Activated naive CD4-positive, alpha-beta T cell treated with anti-CD3 and anti-CD28 coated beads for 36 hours (primary cell): ENCODE measurements at regions of chr6 and their contacts with region 1.

Region 1: DNA sequence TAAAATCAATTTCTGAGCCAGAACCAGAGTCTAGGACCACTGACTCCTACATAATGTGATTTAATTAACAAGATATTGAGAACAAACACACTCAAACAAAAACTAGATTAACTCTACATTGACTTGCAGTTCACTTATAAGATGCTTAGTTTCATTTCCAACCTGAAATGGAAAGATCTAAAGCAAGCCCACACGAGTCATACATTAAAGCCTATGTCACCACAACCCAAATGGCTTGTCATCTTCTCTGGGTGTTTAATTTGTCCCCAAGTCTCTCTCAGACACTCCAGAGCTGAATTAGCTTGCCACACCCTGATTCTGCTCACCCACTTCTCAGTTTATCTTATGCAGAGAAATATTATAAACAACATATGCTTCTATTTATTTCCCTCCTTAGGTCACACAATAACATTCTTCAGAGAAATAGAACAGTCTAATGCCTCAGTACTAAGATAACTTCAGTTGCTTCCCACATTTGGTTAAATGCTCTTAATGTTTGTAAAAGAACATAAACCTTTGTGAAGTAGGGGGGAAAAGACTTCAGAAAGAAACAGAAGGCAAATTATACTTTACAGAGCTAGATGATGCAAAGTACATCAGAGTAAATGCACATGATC is 8.8 kb upstream of the FBXO30 start:
- DNase-seq: peak; percentile 22
- H3K4me3 Mint-ChIP-seq: no peak overlapping the region
- H3K27ac Mint-ChIP-seq: no peak overlapping the region
- H3K4me1 Mint-ChIP-seq: peaks cover 37% of the 10 kb centered on the region
- H3K27me3 Mint-ChIP-seq: no peaks in the 10 kb centered on the region

Region 2: GRCh38 chr6:145836170-145836569 is 12.7 kb after region 1 on chr6:
- CTCF ChIA-PET with region 1: no interaction called
- intact Hi-C with region 1: loop called (anchors 1 kb)
- DNase-seq: peak; percentile 39
- H3K4me3 Mint-ChIP-seq: no peak overlapping the region
- H3K27ac Mint-ChIP-seq: no peak overlapping the region
- H3K4me1 Mint-ChIP-seq: peaks cover 7% of the 10 kb centered on the region
- H3K27me3 Mint-ChIP-seq: no peaks in the 10 kb centered on the region

Region 3: DNA sequence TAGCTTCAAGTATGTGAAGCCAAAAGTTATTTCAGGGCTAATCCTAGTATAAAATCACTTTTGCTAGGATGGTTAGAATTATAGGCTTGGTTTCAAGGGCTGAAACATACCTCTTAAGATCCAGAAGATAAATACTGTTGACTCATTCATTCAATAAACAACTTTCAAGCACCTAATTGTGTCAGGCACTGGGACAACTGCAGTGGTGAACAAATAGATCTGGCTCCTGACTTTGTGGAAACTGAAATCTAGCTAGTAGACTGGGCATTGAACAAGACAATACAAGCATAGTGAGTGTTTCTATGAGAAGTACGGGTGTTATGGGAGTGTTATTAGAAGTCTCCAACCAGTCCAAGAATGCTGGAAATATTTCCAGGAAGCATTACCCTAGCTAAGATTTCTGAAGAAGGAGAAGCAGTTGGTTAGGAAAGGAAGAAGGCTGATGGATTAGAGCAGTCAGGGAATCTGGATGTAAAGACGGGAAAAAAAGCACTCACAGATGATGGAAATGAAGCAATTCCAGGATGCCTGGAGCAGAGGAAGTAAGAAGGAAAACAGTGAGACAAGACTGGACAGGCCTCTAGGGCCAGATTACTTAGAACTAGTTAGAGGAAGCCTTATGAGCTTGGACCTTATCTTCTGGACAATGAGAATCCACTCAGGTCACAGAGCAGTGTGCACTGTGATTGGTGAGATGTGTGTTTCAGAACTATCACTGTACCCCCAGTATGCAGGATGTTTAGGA is 587.6 kb after region 1 on chr6:
- CTCF ChIA-PET with region 1: no interaction called
- intact Hi-C with region 1: no loop called
- DNase-seq: no peak
- H3K4me3 Mint-ChIP-seq: no peak overlapping the region
- H3K27ac Mint-ChIP-seq: no peak overlapping the region
- H3K4me1 Mint-ChIP-seq: no peaks in the 10 kb centered on the region
- H3K27me3 Mint-ChIP-seq: peaks cover 2% of the 10 kb centered on the region

Region 4: DNA sequence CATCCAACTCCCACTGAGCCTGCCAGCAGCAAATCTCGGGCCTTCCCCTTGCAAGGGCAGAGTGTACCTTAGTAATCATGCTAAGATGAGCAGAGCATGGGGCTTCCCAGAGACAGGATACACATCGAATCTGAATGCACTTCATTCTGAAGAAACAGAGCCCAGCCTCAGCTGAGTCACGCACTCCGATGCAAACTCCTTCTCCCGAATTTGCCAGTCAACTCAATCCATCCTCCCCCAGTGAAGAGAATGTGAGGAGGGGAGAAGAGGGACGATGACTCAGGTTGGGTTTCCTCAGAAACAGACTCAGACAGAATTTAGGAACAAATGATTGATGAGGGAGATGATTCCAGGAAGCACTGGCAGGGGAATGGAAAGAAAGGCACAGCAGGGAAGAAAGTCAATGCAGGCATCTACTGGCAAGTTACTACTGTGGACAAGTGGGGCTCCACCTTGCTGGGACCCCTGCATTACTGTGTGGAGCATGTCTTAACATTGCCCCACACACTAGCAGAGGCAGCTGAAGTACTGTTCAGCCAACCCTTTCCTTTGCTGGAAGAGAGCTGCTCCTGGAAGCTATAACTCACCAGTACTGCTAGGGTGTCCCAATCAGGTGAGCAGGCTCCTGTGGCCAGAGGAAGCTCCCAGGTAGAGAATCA is 1026.9 kb after region 1 on chr6:
- CTCF ChIA-PET with region 1: no interaction called
- intact Hi-C with region 1: loop called (anchors 2 kb)
- DNase-seq: peak; percentile 72
- H3K4me3 Mint-ChIP-seq: no peak overlapping the region
- H3K27ac Mint-ChIP-seq: peak overlapping the region; percentile 71
- H3K4me1 Mint-ChIP-seq: peaks cover 31% of the 10 kb centered on the region
- H3K27me3 Mint-ChIP-seq: peaks cover 7% of the 10 kb centered on the region